Lower leg skin (tissue), 4 donors: ENCODE measurements at regions of chr7 and their contacts with region 1.

Region 1: DNA sequence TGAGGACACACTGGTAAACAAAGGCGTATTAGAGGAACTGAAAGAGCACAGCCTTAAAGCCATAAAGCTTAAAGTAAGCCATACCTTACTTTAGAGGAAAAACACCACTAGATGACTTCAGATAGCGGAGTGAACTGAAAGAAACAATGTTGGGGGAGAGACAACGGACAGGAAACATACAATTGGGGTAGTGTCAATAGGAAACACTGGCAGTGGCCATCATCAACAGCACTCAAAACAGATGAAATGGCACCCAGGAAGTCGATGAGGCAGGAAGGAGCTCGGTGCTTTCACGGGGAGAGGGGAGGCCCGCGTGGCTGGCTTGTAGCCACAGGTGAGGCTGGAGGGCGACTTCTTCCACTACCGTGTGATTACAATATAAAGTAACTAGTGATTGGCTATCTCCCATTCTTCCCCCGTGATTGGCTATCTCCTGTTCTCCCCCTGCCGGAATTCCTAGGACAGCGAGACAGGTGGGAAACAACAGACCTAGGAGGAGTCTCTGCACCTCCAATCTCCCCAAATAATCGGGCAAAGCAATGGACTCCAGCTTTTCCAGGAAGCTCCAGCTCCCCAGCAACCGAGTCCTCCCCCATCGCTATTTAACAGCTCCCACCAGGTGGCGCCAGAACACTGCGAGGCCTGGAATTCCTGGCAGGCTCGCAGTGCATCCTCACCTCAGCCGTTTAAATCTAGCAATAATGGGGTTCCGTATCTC is 2.4 kb upstream of the TAS2R38 start:
- DNase-seq: peak; percentile 30 to 90
- H3K4me3 ChIP-seq: no peak overlapping the region
- CTCF ChIP-seq: no peak
- POLR2A ChIP-seq: no peak

Region 2: GRCh38 chr7:142188846-142189245 is 212.9 kb after region 1 on chr7:
- intact Hi-C with region 1: loop called (anchors 5 kb)
- DNase-seq: no peak
- H3K4me3 ChIP-seq: no peak overlapping the region
- CTCF ChIP-seq: no peak
- POLR2A ChIP-seq: no peak